Heart right ventricle (tissue), 16 donors: ENCODE measurements at regions of chr13 and their contacts with region 1.

Region 1: DNA sequence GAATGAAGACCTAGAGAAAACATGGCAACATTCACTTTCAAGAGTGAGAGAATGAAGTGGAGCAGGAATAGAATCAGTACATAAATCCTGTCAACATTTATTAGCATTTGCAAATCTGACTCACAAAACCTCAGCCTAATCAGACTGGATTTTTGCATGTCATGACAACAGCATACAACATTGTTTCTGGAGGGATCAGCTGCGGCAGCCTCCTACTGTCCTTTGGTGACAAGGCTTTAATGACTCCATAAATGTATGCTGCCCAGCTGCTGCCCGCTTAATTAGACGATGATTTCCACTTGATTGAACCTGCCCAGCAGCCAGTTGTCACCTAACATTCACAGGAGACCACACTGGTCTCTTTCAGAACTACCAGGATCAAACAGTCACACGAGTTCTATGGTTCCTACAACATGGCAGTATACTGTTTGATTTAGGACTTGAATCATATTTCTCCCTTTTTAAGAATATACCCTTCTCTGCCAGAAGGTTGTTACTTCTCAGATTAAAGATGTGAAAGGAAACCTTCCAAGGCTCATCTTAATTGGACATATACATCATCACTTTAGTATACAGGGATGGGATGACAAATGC is 9.3 kb downstream of the EBPL start:
- DNase-seq: no peak
- ATAC-seq: no peak
- H3K4me3 ChIP-seq: no peak overlapping the region
- H3K27ac ChIP-seq: no peak overlapping the region
- H3K4me1 ChIP-seq: no peaks in the 10 kb centered on the region
- H3K27me3 ChIP-seq: no peaks in the 10 kb centered on the region
- CTCF ChIP-seq: no peak

Region 2: DNA sequence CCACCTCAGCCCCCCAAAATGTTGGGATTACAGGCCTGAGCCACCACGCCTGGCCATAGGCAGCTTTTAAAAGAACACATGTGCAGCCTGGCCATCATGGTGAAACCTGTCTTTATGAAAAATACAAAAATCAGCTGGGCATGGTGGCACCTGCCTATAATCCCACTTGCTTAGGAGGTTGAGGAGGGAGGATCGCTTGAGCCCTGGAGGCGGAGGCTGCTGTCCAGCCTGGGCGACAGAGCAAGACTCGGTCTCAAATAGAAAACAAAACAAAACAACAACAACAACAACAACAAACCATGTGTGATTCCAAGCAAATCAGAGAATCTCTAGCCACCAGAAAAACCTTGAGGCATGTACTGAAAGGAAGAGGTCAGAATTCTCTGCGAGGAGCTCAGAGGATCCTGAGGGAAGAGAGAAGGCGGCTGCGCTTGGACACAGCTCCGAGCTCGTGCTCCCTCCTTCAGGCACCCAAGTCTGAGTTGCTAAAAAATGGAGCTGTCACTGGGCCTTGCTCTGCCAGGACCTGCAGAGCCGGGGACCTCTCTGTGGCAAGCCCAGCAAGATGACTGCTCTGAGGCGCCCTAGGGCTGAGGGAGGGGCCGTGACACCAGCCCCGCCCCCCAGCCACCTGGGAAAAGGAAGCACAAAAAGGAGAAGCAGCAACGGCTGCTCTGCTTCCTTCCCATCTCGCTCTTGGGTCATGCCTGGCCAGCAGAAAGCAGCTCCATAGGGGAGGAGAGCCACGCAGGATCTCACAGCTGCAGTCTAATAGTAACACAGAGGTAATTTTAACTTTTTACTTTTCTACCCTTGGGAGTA is 53.9 kb before region 1 on chr13 and contains the start of gene ARL11:
- intact Hi-C with region 1: no loop called
- DNase-seq: peak; percentile 43 to 60
- ATAC-seq: peak; percentile 24 to 64 (median 54)
- H3K4me3 ChIP-seq: peak within 1 kb of the TSS in 7 of 10 donors; percentile 13 to 55 (median 27)
- H3K27ac ChIP-seq: peak within 1 kb of the TSS in 7 of 10 donors; percentile 25 to 87 (median 49)
- H3K4me1 ChIP-seq: peaks cover 0 to 72% (median 12%) of the 10 kb centered on the region in 9 donors
- H3K27me3 ChIP-seq: no peaks in the 10 kb centered on the region
- CTCF ChIP-seq: no peak
- total RNA-seq, gene ARL11: 0.09 to 1.1 (median 0.23) TPM

Region 3: GRCh38 chr13:49716615-49717014 is 34.7 kb after region 1 on chr13:
- intact Hi-C with region 1: no loop called
- DNase-seq: no peak
- ATAC-seq: no peak
- H3K4me3 ChIP-seq: no peak overlapping the region
- H3K27ac ChIP-seq: no peak overlapping the region
- H3K4me1 ChIP-seq: no peaks in the 10 kb centered on the region
- H3K27me3 ChIP-seq: no peaks in the 10 kb centered on the region
- CTCF ChIP-seq: no peak

Region 4: GRCh38 chr13:49784886-49785570 is 103.1 kb after region 1 on chr13:
- intact Hi-C with region 1: loop called in 1 of 10 experiments (anchors 10 kb)
- DNase-seq: no peak
- ATAC-seq: no peak
- H3K4me3 ChIP-seq: no peak overlapping the region
- H3K27ac ChIP-seq: no peak overlapping the region
- H3K4me1 ChIP-seq: peaks cover 2 to 87% (median 57%) of the 10 kb centered on the region in 9 donors
- H3K27me3 ChIP-seq: no peaks in the 10 kb centered on the region
- CTCF ChIP-seq: no peak